HepG2 (cell line): ENCODE measurements at regions of chr15 and their contacts with region 1.

Region 1: DNA sequence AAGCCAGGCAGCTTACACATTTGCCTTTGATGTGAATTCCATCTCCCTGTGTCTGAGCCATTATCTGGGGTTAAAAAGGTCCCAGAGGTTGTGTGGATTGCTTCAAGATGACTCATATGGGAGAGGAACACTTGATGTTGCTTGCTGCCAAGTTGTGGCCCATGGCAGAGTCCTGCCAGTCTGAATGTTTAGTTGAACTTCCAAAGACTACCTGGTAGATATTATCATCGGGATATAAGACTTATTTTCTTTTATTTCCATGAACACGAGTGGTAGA is 85.6 kb downstream of the TJP1 start:
- DNase-seq: peak; percentile 92
- ATAC-seq: peak; percentile 84
- H3K4me3 ChIP-seq: no peak overlapping the region
- H3K27ac ChIP-seq: no peak overlapping the region
- H3K4me1 ChIP-seq: peaks cover 30% of the 10 kb centered on the region
- H3K27me3 ChIP-seq: no peaks in the 10 kb centered on the region
- CTCF ChIP-seq: no peak
- EP300 ChIP-seq: peak in 1 of 2 experiments; percentile 60; a peak in 1 of 4 replicates
- POLR2A ChIP-seq: no peak
- RAD21 ChIP-seq: no peak

Region 2: DNA sequence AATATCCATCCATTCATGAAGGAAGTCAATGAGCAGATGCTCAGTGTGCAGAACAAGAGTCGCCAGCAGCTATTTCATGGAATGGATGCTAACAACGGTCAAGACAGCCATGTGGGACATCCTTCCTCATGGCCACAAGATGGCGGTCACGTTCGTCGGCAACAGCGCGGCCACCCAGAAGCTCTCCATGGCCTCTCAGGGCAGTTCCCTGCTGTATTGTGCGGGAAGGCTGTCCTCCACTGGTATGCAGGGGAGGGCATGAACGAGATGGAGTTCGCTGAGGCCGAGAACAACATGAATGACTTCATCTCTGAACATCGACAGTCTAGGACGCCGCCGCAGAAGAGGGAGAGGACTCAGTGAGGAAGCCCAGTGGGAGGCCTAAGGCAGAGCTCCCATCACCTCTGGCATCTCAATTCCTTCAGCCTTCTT is 122.7 kb before region 1 on chr15:
- CTCF ChIA-PET with region 1: no interaction called
- POLR2A ChIA-PET with region 1: no interaction called
- in situ Hi-C with region 1: no loop called
- intact Hi-C with region 1: no loop called
- DNase-seq: peak; percentile 29
- ATAC-seq: peak; percentile 97
- H3K4me3 ChIP-seq: no peak overlapping the region
- H3K27ac ChIP-seq: no peak overlapping the region
- H3K4me1 ChIP-seq: no peaks in the 10 kb centered on the region
- H3K27me3 ChIP-seq: peaks cover 1 to 4% of the 10 kb centered on the region in 2 experiments; a peak in 3 of 5 replicates
- CTCF ChIP-seq: peak; percentile 77
- EP300 ChIP-seq: no peak
- POLR2A ChIP-seq: no peak
- RAD21 ChIP-seq: no peak

Region 3: DNA sequence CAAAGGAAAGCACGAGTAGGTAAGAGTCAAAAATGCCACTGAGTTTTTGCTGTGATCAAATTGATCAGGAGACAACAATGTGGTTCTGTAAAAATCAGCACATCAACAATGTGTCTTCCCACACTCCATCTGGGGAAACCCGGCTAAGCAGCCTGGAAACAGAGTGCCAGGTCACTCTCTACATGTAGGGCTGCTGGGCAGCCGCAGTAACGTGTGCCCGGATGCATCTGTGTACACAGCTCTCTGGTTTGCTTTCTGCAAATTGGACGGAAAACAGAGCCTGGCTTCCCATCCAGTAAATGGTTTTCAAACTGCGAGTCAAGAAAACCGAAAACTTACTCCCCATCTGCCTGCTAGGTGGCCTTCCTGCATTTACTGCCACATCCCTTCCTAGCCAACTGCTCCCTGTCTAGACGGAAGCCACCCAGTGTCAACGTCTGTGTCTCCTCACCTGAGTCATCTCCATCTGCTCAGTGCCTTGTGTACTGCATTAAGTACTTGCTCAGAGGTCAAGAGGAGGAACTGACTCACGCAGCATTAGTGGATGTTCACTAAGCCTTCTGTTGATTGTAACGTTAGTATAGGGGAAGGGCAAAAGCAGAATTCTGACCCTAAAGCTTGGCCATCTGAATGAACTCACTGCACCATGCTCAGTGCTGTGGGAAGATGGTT is 38.5 kb before region 1 on chr15:
- CTCF ChIA-PET with region 1: no interaction called
- POLR2A ChIA-PET with region 1: no interaction called
- in situ Hi-C with region 1: no loop called
- intact Hi-C with region 1: loop called (anchors 5 kb)
- DNase-seq: peak; percentile 61
- ATAC-seq: peak; percentile 59
- H3K4me3 ChIP-seq: no peak overlapping the region
- H3K27ac ChIP-seq: no peak overlapping the region
- H3K4me1 ChIP-seq: peaks cover 47% of the 10 kb centered on the region
- H3K27me3 ChIP-seq: no peaks in the 10 kb centered on the region
- CTCF ChIP-seq: no peak
- EP300 ChIP-seq: no peak
- POLR2A ChIP-seq: no peak
- RAD21 ChIP-seq: no peak

Region 4: GRCh38 chr15:29774900-29775299 is 38.2 kb after region 1 on chr15:
- CTCF ChIA-PET with region 1: no interaction called
- POLR2A ChIA-PET with region 1: no interaction called
- in situ Hi-C with region 1: no loop called
- intact Hi-C with region 1: loop called (anchors 5 kb)
- DNase-seq: peak; percentile 21
- ATAC-seq: no peak
- H3K4me3 ChIP-seq: no peak overlapping the region
- H3K27ac ChIP-seq: no peak overlapping the region
- H3K4me1 ChIP-seq: peaks cover 39% of the 10 kb centered on the region
- H3K27me3 ChIP-seq: no peaks in the 10 kb centered on the region
- CTCF ChIP-seq: no peak
- EP300 ChIP-seq: no peak
- POLR2A ChIP-seq: no peak
- RAD21 ChIP-seq: no peak

Region 5: GRCh38 chr15:29888646-29889045 is 152.0 kb after region 1 on chr15:
- CTCF ChIA-PET with region 1: no interaction called
- POLR2A ChIA-PET with region 1: no interaction called
- in situ Hi-C with region 1: no loop called
- intact Hi-C with region 1: no loop called
- DNase-seq: no peak
- ATAC-seq: peak; percentile 39; the same call in 1 of the 3 replicates
- H3K4me3 ChIP-seq: no peak overlapping the region
- H3K27ac ChIP-seq: no peak overlapping the region
- H3K4me1 ChIP-seq: peaks cover 7% of the 10 kb centered on the region
- H3K27me3 ChIP-seq: peaks cover 0 to 4% of the 10 kb centered on the region in 2 experiments; a peak in 1 of 5 replicates
- CTCF ChIP-seq: no peak
- EP300 ChIP-seq: no peak
- POLR2A ChIP-seq: no peak
- RAD21 ChIP-seq: no peak